ENCODE measurements at regions of chr17 and their contacts with region 1.

Region 1: DNA sequence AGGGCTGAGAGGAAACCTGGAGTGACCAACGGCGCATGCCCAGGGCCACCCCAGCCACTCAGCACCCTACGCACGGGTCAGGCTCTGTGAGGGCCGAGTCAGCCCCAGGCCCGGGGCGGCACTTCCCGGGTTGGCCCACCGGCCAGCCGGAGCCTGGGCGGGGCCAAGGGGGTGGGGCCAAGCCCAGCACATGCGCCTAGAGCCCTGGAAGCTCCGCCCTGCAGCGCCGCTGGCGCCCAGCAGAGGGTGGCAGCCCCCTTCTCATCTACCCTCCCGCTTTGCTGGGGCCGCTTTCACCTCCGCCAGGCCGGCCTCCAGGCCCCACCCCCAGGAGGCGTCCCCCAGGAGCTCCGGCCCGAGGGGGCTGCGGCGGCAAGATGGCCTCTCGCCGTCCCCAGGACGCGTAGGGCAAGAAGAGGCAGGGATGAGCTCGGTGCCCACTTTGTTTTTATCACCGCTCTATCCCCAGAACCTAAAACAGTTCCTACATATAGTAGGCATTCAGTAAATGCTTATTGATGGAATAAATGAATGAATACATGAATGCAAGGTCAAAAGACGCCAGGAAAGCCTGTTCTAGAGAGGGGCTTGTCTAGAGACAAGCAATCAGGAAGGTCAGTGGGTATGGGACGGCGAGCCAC is 31.3 kb downstream of the MYO18A start:
- DNase-seq: peak; percentile 79
- H3K4me3 ChIP-seq: peak overlapping the region; percentile 56
- H3K27ac ChIP-seq: peak overlapping the region; percentile 47
- H3K27me3 ChIP-seq: no peaks in the 10 kb centered on the region
- CTCF ChIP-seq: peak; percentile 88

Region 2: GRCh38 chr17:29124117-29124924 is 24.6 kb before region 1 on chr17:
- CTCF ChIA-PET with region 1: interaction called, 66 read pairs
- POLR2A ChIA-PET with region 1: interaction called, 5 read pairs
- DNase-seq: no peak
- H3K4me3 ChIP-seq: no peak overlapping the region
- H3K27ac ChIP-seq: peak overlapping the region; percentile 31
- H3K27me3 ChIP-seq: no peaks in the 10 kb centered on the region
- CTCF ChIP-seq: peak; percentile 83

Region 3: GRCh38 chr17:29180034-29180787 is 31.3 kb after region 1 on chr17 and contains the start of gene MYO18A:
- CTCF ChIA-PET with region 1: interaction called, 166 read pairs
- POLR2A ChIA-PET with region 1: interaction called, 16 read pairs
- DNase-seq: peak; percentile 32
- H3K4me3 ChIP-seq: peak within 1 kb of the TSS; percentile 67
- H3K27ac ChIP-seq: no peak within 1 kb of the TSS
- H3K27me3 ChIP-seq: no peaks in the 10 kb centered on the region
- CTCF ChIP-seq: peak; percentile 77
- polyA plus RNA-seq, gene MYO18A: 9.8 and 16.7 TPM in 2 replicates

Region 4: GRCh38 chr17:29252101-29252866 is 103.4 kb after region 1 on chr17:
- CTCF ChIA-PET with region 1: interaction called, 22 read pairs
- POLR2A ChIA-PET with region 1: interaction called, 5 read pairs
- DNase-seq: no peak
- H3K4me3 ChIP-seq: no peak overlapping the region
- H3K27ac ChIP-seq: peak overlapping the region; percentile 22
- H3K27me3 ChIP-seq: no peaks in the 10 kb centered on the region
- CTCF ChIP-seq: peak; percentile 56

Region 5: GRCh38 chr17:29591737-29592624 is 443.1 kb after region 1 on chr17:
- CTCF ChIA-PET with region 1: interaction called, 10 read pairs
- POLR2A ChIA-PET with region 1: no interaction called
- DNase-seq: no peak
- H3K4me3 ChIP-seq: peak overlapping the region; percentile 44
- H3K27ac ChIP-seq: peak overlapping the region; percentile 65
- H3K27me3 ChIP-seq: no peaks in the 10 kb centered on the region
- CTCF ChIP-seq: peak; percentile 98

Measured in AG04450 (cell line).